ENCODE measurements at regions of chr19 and their contacts with region 1.

Region 1: DNA sequence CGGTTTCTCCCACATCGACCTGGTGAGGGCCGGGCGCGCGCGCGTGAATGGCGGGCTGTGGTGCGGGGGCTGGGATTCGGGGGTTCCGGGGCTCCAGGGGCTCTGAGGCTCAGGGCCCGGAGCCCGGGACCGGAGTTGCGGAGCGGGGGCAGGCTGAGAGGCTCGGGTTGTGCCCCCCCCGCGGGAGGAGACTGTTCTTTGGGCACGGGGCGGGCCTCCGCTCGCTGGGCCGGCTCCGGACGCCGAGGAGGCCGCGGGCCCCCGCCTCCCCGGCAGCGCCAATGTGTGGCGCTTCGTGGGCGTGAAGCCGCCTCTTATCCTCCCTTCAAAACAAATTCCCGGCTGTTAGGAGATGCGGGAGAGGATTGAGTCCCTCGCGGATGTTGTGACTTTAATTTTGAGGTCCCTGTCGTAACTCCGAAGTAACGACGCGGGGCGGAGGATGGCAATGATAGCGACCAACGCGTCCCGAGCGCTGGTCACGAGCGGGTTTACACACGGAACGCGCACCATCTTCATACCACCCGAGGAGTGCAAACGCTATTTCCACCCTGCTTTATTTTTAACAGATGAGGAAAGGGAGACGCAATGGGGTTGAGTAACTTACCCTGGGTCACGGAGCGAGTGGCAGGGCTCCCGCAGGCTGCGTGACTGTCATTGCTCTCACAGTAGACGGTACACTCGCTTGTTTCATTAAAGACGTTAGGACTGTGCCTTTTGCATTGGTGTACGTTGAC is 536 bp downstream of the UBA2 start:
- DNase-seq: peak in 4 of 10 donors; percentile 24 to 53 (median 38)
- H3K4me3 ChIP-seq: peak overlapping the region; percentile 74 to 98 (median 92)
- H3K27ac ChIP-seq: peak overlapping the region in 58 of 59 donors; percentile 2 to 94 (median 87)
- H3K27me3 ChIP-seq: no peaks in the 10 kb centered on the region
- CTCF ChIP-seq: peak in 4 of 56 donors; percentile 3 to 15 (median 7)

Region 2: DNA sequence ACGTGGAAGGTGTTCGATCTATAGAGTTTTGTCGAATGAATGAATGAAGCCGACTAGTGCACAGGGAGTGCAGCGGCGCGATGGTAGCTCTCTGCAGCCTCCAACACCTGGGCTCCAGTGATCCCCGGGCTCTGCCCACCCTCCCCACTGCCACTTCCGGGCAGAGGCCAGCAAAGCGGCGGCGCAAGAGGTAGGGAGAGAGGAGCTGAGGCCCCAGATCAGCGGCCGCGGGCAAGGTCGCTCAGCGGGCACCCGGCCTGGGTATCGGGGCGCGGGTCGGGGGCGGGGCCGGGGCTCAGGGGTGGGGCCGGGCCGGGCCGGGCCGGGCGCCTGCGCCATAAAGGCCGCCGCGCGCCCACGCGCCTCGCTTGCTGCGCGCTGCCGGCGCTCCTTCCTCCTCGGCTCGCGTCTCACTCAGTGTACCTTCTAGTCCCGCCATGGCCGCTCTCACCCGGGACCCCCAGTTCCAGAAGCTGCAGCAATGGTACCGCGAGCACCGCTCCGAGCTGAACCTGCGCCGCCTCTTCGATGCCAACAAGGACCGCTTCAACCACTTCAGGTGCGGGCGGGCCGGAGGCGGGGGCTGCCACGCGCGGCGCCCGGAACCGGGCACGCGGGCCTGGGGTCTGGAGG is 63.8 kb before region 1 on chr19 and contains the start of gene GPI:
- intact Hi-C with region 1: loop called (anchors 2 to 5 kb)
- DNase-seq: peak; percentile 35 to 80 (median 56)
- H3K4me3 ChIP-seq: peak within 1 kb of the TSS; percentile 65 to 99 (median 94)
- H3K27ac ChIP-seq: peak within 1 kb of the TSS in 57 of 59 donors; percentile 39 to 94 (median 83)
- H3K27me3 ChIP-seq: no peaks in the 10 kb centered on the region
- CTCF ChIP-seq: peak in 2 of 56 donors; percentile 8 to 18
- total RNA-seq, gene GPI: 264 to 683 (median 537) TPM